Psoas muscle (tissue), 8 donors: ENCODE measurements at regions of chr2 and their contacts with region 1.

Region 1: DNA sequence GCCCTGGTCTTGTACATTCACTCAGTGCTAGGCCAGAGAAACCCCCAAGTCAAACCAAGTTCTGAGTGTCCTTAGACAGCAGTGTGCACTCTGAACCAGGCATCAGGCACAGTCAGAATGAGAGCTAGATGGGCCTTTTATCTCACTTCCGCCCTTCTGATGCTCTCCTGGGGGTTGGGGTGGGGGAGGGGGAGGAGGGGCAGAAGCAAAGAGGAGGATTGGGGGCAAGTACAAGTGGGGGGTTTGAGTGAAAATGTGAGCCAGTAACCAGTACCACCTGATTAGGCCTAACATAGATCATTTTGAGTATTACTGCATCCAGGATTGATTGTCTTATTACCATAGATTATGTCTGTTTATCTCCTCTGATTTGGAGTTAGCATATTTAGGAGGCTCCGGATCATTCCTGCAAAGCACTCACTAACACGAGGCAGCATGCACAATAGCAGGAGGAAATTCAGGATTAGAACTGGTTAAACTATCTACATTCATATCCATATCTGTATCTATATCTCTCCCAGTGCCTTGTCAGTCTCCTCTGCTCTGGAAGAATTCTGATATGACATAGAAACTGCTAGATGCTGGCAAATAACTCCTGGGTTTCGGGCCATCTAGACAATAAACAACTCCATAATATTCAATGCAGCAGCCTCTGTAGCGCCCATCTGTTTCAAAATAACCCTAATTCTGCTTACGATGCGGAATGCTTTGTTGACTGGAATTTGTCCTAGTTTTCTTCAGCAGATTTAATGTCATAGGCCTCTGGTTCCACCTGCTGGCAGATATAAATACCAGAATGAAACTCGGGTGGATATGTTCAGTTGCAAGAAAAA is 149.1 kb downstream of the RHBDD1 start:
- DNase-seq: no peak
- ATAC-seq: peak; percentile 75 to 95 (median 85)
- H3K4me3 ChIP-seq: no peak overlapping the region
- H3K27ac ChIP-seq: peak overlapping the region; percentile 27
- H3K4me1 ChIP-seq: peaks cover 10% of the 10 kb centered on the region
- H3K27me3 ChIP-seq: no peaks in the 10 kb centered on the region
- CTCF ChIP-seq: peak; percentile 75

Region 2: GRCh38 chr2:225668606-225669266 is 1316.2 kb before region 1 on chr2:
- intact Hi-C with region 1: loop called (anchors 1 to 2 kb)
- DNase-seq: no peak
- ATAC-seq: peak in 2 of 4 donors; percentile 65 to 68
- H3K4me3 ChIP-seq: no peak overlapping the region
- H3K27ac ChIP-seq: no peak overlapping the region
- H3K4me1 ChIP-seq: no peaks in the 10 kb centered on the region
- H3K27me3 ChIP-seq: no peaks in the 10 kb centered on the region
- CTCF ChIP-seq: peak; percentile 65

Region 3: GRCh38 chr2:225889446-225889850 is 1095.5 kb before region 1 on chr2:
- intact Hi-C with region 1: loop called (anchors 5 to 10 kb)
- DNase-seq: no peak
- ATAC-seq: peak; percentile 70 to 91 (median 76)
- H3K4me3 ChIP-seq: no peak overlapping the region
- H3K27ac ChIP-seq: no peak overlapping the region
- H3K4me1 ChIP-seq: no peaks in the 10 kb centered on the region
- H3K27me3 ChIP-seq: no peaks in the 10 kb centered on the region
- CTCF ChIP-seq: peak; percentile 84

Region 4: GRCh38 chr2:226813148-226813701 is 171.7 kb before region 1 on chr2:
- intact Hi-C with region 1: loop called in 1 of 2 experiments (anchors 5 kb)
- DNase-seq: no peak
- ATAC-seq: no peak
- H3K4me3 ChIP-seq: no peak overlapping the region
- H3K27ac ChIP-seq: no peak overlapping the region
- H3K4me1 ChIP-seq: no peaks in the 10 kb centered on the region
- H3K27me3 ChIP-seq: no peaks in the 10 kb centered on the region
- CTCF ChIP-seq: no peak

Region 5: GRCh38 chr2:226835796-226836547 is 149.0 kb before region 1 on chr2 and contains the start of gene RHBDD1:
- intact Hi-C with region 1: loop called in 1 of 2 experiments (anchors 10 kb)
- DNase-seq: peak; percentile 96 to 97
- ATAC-seq: peak; percentile 98 to 99 (median 98)
- H3K4me3 ChIP-seq: peak within 1 kb of the TSS; percentile 86
- H3K27ac ChIP-seq: peak within 1 kb of the TSS; percentile 96
- H3K4me1 ChIP-seq: peaks cover 36% of the 10 kb centered on the region
- H3K27me3 ChIP-seq: no peaks in the 10 kb centered on the region
- CTCF ChIP-seq: no peak
- total RNA-seq, gene RHBDD1: 15.8 to 26.1 (median 20.1) TPM